Activated CD8-positive, alpha-beta T cell treated with anti-CD3 and anti-CD28 coated beads, Interleukin-2, amount 10 ng/mL, durations not matched to agents 7 days and 5 days (primary cell): ENCODE measurements at regions of chr10 and their contacts with region 1.

Region 1: DNA sequence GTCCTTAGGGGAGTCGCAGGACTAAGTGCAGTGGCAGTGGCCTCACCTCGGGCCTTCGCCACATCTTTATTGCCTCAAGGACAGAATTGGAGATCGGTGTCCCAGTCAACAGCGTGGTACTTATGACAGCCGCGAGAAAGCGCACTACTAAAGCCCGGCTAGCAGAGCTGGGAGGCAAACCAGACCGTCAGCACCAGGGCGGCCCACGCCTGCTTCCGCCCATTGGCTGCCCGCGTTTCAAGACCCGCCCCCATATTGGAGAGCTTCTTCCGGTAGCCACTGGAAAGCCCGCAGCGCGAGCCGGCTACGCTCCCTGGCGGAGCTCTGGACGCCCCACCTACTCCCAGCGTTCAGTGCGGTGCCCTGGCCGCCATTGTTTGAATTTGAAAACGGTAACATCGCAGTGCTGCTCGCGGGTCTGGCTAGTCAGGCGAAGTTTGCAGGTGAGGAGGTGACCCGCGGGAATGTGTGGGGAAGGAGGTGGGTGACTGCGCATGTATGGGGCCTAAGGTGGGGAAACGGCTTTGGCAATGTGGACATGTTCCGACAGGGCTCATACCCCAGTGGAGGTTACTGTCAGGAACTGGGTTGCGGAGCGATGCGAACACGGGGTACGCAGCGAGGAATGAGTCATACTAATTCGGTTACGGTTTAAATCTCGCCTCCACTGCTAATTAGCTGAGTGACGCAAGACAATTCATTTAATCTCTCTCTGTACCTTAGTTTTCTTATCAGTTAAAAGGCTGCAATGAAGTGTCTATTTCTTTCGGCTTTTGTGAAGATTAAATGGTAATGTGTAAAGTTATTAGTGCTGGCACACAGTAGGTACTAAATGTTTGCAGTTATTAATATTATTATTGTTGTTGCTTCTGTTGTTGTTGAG is at the start of gene KIF20B:
- DNase-seq: peak; percentile 98
- ATAC-seq: peak; percentile 99
- H3K4me3 Mint-ChIP-seq: peak within 1 kb of the TSS; percentile 99
- H3K27ac Mint-ChIP-seq: peak within 1 kb of the TSS; percentile 99
- H3K4me1 Mint-ChIP-seq: peaks cover 48% of the 10 kb centered on the region
- H3K27me3 Mint-ChIP-seq: no peaks in the 10 kb centered on the region
- total RNA-seq, gene KIF20B: 68.9 to 78.4 TPM

Region 2: GRCh38 chr10:89643431-89644331 is 57.8 kb before region 1 on chr10:
- CTCF ChIA-PET with region 1: interaction called, 8 read pairs
- POLR2A ChIA-PET with region 1: interaction called, 29 read pairs
- DNase-seq: peak; percentile 89
- ATAC-seq: peak; percentile 89
- H3K4me3 Mint-ChIP-seq: no peak overlapping the region
- H3K27ac Mint-ChIP-seq: no peak overlapping the region
- H3K4me1 Mint-ChIP-seq: peaks cover 12% of the 10 kb centered on the region
- H3K27me3 Mint-ChIP-seq: peaks cover 22% of the 10 kb centered on the region

Region 3: GRCh38 chr10:89659143-89660131 is 42.0 kb before region 1 on chr10:
- CTCF ChIA-PET with region 1: no interaction called
- POLR2A ChIA-PET with region 1: no interaction called
- DNase-seq: no peak
- ATAC-seq: no peak
- H3K4me3 Mint-ChIP-seq: no peak overlapping the region
- H3K27ac Mint-ChIP-seq: no peak overlapping the region
- H3K4me1 Mint-ChIP-seq: no peaks in the 10 kb centered on the region
- H3K27me3 Mint-ChIP-seq: peaks cover 17% of the 10 kb centered on the region